PC-9 (cell line): ENCODE measurements at regions of chr7 and their contacts with region 1.

Region 1: DNA sequence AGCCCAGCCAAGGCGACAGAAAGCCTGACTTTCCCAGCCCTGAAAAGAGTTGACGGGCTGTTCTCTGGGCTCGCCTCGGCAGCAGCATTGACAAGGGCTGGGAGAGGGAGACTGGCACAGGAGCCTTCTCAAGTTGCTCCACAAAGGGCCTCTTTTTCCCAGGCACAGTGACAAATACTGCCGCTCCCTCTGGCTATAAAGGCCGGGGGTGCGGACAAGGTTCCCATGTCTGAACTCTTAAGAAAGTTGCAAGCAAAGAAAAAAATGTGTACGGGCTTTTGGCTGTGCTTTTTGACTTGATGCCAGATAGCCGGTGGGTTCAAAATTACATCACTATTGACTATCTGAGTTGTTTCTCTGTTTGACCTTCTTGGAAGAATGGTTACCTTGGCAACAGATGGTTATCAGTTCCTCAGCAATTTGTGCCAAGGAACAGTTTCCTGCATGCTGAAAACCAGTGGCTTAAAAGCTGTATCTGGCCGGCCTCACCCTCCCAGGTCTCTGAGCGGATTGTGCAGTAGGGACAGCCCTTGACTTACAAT is 115.9 kb upstream of the EEPD1 start:
- DNase-seq: peak; percentile 94 to 100
- H3K4me3 ChIP-seq: peak overlapping the region; percentile 20; the same call in 1 of the 2 replicates
- H3K27ac ChIP-seq: peak overlapping the region; percentile 87
- H3K4me1 ChIP-seq: peaks cover 75% of the 10 kb centered on the region
- H3K27me3 ChIP-seq: no peaks in the 10 kb centered on the region
- CTCF ChIP-seq: no peak

Region 2: DNA sequence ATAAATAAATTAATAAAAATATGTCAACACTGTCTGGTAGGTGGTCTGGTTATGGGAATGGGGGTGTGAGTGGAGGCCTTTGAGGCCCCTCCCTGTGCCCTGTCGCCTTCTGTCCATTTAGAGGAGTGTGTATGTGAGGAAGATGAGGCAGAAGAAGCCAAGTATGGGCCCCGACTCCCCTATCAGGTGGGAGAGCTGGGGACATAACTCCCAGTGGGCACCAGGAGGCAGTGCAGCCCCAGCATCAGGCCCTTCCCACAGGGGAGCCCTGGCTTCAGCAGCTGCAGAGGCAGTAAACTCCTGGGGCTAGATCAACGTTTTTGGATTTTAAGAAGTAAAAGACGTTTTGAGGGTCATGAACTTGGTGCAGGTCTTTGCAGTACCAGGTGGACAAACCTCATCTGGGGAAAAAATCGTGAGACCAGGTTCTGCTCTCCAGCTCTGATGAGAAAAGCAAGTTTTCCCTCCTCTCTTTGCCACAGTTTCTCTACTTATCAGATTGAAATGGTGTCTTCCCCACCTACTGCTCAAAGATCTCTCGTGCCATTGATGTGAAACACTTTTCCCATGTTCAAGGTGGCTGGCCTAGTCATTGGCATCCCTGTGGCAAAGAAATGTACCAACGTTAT is 52.0 kb before region 1 on chr7:
- CTCF ChIA-PET with region 1: no interaction called
- POLR2A ChIA-PET with region 1: no interaction called
- intact Hi-C with region 1: loop called (anchors 2 kb)
- DNase-seq: peak; percentile 57 to 84
- H3K4me3 ChIP-seq: no peak overlapping the region
- H3K27ac ChIP-seq: no peak overlapping the region
- H3K4me1 ChIP-seq: peaks cover 18% of the 10 kb centered on the region
- H3K27me3 ChIP-seq: no peaks in the 10 kb centered on the region
- CTCF ChIP-seq: peak; percentile 99

Region 3: DNA sequence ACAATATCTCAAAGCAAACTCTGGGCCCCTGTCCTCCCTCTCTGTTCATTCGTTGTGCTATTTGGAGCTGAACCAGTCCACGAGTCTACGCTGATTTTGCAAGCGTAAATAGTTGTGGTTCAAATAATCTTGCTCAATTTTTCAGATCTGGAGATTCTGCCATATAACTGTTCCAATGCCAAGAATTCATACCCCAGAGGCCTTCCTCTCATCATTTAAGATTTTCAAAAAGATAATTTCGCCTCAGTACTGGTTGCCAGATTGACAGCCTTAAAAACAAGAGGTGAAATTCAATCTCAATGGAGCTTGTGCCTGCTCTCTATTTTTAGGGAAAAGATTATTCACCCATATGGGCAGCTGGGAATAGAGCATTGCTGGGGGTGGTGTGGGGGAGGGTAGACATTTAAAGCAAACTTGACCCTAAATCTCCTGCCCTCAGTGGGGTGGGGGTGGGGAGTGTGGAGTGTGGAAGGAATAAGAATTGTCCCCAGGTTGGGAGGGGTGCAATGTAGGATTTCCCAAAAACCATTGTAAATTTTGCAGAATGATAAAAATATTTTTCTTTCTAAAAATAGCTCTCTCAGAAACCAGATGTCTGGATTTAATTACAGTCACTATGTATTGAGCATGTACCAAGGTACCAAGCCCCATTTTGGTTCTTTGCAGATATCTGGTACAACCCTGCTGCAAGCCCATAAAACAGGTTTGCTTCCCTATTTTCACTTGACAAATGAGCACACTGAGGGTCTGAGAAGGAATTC is 11.1 kb after region 1 on chr7:
- CTCF ChIA-PET with region 1: no interaction called
- POLR2A ChIA-PET with region 1: no interaction called
- intact Hi-C with region 1: loop called (anchors 1 kb)
- DNase-seq: peak; percentile 55 to 98
- H3K4me3 ChIP-seq: no peak overlapping the region
- H3K27ac ChIP-seq: peak overlapping the region; percentile 28
- H3K4me1 ChIP-seq: peaks cover 61% of the 10 kb centered on the region
- H3K27me3 ChIP-seq: no peaks in the 10 kb centered on the region
- CTCF ChIP-seq: no peak

Region 4: GRCh38 chr7:36109013-36109627 is 71.9 kb after region 1 on chr7:
- CTCF ChIA-PET with region 1: interaction called, 6 read pairs
- POLR2A ChIA-PET with region 1: no interaction called
- intact Hi-C with region 1: loop called (anchors 1 kb)
- DNase-seq: peak; percentile 89 to 99
- H3K4me3 ChIP-seq: no peak overlapping the region
- H3K27ac ChIP-seq: peak overlapping the region; percentile 62
- H3K4me1 ChIP-seq: peaks cover 46% of the 10 kb centered on the region
- H3K27me3 ChIP-seq: no peaks in the 10 kb centered on the region
- CTCF ChIP-seq: no peak

Region 5: GRCh38 chr7:36128448-36129047 is 91.4 kb after region 1 on chr7:
- CTCF ChIA-PET with region 1: no interaction called
- POLR2A ChIA-PET with region 1: no interaction called
- intact Hi-C with region 1: loop called (anchors 1 kb)
- DNase-seq: peak; percentile 82 to 95
- H3K4me3 ChIP-seq: peak overlapping the region; percentile 40
- H3K27ac ChIP-seq: peak overlapping the region; percentile 86
- H3K4me1 ChIP-seq: peaks cover 33% of the 10 kb centered on the region
- H3K27me3 ChIP-seq: no peaks in the 10 kb centered on the region
- CTCF ChIP-seq: peak; percentile 100